Activated CD4-positive, alpha-beta memory T cell treated with anti-CD3 and anti-CD28 coated beads for 36 hours (primary cell): ENCODE measurements at regions of chr19 and their contacts with region 1.

Region 1: GRCh38 chr19:13033819-13034611 is 38.7 kb downstream of the NFIX start:
- DNase-seq: peak; percentile 60
- H3K4me3 Mint-ChIP-seq: no peak overlapping the region
- H3K27ac Mint-ChIP-seq: no peak overlapping the region
- H3K4me1 Mint-ChIP-seq: peaks cover 5% of the 10 kb centered on the region
- H3K27me3 Mint-ChIP-seq: no peaks in the 10 kb centered on the region

Region 2: DNA sequence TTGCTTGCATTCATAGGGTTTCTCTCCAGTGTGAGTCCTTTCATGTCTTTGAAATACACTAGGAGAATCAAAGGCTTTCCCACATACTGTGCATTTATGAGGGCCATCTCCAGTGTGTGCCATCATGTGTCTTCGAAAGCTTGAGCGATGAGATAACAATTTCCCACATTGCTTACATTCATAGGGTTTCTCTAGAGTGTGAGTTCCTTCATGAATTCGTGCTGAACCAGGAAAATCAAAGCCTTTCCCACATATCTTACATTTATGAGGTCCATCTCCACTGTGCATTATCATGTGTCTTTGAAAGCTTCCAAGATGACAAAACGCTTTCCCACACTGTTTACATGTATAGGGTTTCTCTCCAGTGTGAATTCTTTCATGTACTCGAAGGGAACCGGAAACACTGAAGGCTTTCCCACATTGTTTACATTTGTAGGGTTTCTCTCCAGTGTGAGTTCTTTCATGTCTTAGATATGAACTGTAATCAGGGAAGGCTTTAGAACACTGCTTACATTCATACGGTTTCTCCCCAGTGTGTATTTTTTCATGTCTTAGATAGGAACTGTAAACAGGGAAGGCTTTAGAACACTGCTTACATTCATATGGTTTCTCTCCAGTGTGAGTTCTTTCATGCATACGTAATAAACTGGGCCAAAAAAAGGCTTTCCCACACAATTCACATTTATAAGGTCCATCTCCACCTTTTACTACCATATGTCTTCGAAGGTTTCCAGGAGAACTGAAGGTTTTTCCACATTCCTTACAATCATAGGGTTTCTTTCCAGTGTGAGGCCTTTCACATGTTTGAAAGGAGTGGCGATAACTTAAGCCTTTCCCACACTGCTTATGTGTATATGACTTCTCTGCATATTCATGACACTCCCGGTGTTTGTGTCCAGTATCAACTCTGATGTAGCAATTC is 760.8 kb before region 1 on chr19:
- CTCF ChIA-PET with region 1: no interaction called
- POLR2A ChIA-PET with region 1: no interaction called
- intact Hi-C with region 1: no loop called
- DNase-seq: no peak
- H3K4me3 Mint-ChIP-seq: no peak overlapping the region
- H3K27ac Mint-ChIP-seq: no peak overlapping the region
- H3K4me1 Mint-ChIP-seq: peaks cover 4% of the 10 kb centered on the region
- H3K27me3 Mint-ChIP-seq: no peaks in the 10 kb centered on the region

Region 3: DNA sequence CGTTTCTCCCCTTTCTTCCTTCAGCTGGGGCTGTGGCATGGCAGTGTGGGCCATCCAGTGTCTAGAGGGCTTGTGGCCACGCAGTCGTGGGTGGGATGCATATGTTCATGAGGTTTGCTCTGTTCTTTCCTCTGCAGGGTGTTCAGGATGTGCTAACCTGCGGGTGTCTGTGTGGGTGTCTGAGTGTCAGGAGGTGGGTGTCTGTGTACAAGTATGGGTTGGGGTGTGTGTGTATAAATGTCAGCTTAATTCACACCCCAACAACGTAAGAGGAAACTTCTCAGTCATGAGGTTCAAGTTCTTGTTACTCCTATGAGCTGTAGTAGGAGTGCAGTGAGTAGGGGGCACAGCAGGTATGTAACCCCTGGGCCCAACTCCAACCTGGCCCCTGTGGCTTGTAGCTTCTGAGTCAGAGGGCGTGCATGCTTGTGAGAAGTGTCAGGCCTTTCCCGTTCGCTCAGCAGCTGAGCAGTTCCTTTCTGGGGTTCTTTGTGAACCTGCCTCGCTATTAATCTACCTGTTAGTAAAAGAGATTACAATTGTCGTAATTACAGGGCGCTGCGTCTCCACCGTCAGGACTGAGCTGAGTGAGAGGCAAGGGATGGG is 10.3 kb after region 1 on chr19:
- CTCF ChIA-PET with region 1: interaction called, 11 read pairs
- POLR2A ChIA-PET with region 1: no interaction called
- intact Hi-C with region 1: no loop called
- DNase-seq: no peak
- H3K4me3 Mint-ChIP-seq: no peak overlapping the region
- H3K27ac Mint-ChIP-seq: no peak overlapping the region
- H3K4me1 Mint-ChIP-seq: peaks cover 5% of the 10 kb centered on the region
- H3K27me3 Mint-ChIP-seq: no peaks in the 10 kb centered on the region

Region 4: DNA sequence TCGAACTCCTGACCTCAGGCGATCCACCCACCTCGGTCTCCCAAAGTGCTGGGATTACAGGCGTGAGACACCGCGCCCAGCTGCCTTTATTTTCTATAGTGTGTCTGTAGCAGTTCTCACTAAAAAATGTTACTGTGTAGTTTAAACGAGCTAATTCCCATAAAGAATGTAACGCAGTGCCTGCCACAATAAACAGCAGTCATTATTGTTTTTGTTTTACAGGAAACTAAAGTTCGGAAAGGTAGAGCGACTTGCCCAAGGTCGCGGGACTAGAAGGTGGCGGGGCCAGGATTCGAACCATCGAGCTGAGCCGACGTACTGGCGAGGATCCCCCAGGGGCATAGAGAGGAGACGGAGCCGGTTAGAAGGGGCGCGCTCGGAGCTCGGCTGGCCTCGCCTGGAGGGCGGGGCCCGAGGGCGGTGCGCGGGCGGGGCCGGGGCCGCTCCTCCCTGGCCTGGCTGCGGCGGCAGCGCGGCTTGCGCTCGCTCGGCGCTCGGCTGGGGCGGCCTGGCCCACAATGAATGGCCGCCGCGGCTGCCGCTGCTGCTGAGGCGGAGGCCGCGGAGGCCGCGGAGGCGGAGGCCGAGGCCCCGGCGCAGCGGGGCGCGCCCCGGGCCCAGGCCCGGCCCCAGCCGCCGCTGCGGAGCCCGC is 83.9 kb after region 1 on chr19 and contains the start of gene NACC1:
- CTCF ChIA-PET with region 1: no interaction called
- POLR2A ChIA-PET with region 1: no interaction called
- intact Hi-C with region 1: no loop called
- DNase-seq: peak; percentile 94
- H3K4me3 Mint-ChIP-seq: peak within 1 kb of the TSS; percentile 86
- H3K27ac Mint-ChIP-seq: peak within 1 kb of the TSS; percentile 93
- H3K4me1 Mint-ChIP-seq: peaks cover 51% of the 10 kb centered on the region
- H3K27me3 Mint-ChIP-seq: no peaks in the 10 kb centered on the region
- total RNA-seq, gene NACC1: 89.8 to 90.9 TPM